T-cell (primary cell): ENCODE measurements at regions of chr14 and their contacts with region 1.

Region 1: DNA sequence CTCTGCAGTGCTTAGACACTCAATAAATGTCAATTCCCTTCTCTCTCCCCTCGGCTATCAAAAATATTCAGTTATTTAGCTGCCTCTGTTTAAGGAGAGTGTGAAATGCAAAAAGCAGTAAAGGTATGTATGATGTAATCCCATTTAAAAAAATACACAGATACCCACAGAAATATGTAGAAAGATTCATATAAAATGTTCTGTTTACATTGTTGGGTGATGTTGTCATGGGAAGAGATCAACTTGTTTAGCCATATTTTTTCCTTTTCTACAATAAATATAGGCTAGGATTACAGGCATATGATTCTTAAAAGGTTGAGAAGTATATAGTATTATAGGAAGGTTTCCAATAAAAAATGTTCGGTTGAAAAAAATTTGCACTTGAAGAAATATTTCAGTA is 7.8 kb downstream of the PPP2R3C start:
- DNase-seq: no peak
- ATAC-seq: no peak
- H3K4me3 ChIP-seq: no peak overlapping the region
- H3K4me3 Mint-ChIP-seq: no peak overlapping the region
- H3K27ac ChIP-seq: no peak overlapping the region
- H3K27ac Mint-ChIP-seq: no peak overlapping the region
- H3K4me1 ChIP-seq: peaks cover 0 to 7% of the 10 kb centered on the region in 2 experiments
- H3K4me1 Mint-ChIP-seq: peaks cover 37 to 46% (median 43%) of the 10 kb centered on the region in 3 donors
- H3K27me3 ChIP-seq: no peaks in the 10 kb centered on the region
- H3K27me3 Mint-ChIP-seq: no peaks in the 10 kb centered on the region

Region 2: DNA sequence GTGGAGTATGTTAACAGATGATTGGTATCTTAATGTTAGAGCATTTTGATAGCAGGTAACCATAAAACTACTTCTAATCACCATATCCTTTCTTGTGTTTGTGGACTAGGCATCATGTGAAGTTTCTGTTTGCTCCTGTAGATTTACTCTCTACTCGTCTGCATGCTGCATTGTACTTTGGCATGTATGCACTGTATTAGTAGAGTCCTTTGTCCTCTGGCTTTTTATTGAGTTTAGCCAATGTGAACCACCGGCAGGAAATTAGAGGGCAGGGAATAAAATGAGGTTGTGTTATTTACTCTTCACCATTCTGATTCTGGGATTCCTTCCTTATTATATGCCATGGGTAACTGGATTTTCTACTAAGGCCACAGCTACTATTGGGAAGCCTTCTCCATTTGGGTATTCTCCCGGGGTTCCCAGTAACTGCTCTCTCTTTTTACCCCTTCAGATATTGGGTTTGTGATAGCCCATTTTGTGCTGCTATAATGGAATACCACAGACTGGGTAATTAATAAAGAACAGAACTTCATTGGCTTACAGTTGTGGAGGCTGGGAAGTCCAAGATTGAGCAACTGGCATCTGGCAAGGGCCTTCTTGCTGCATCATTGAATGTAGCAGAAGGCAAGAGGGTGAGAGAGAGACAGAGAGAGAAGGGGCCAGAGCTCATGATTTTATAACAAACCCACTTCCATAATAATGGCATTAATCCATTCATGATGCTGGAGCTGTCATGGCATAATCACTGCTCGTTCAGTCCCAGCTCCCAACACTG is 45.6 kb before region 1 on chr14:
- CTCF ChIA-PET with region 1: no interaction called
- POLR2A ChIA-PET with region 1: interaction called in 1 of 2 experiments, 10 read pairs
- DNase-seq: no peak
- ATAC-seq: no peak
- H3K4me3 ChIP-seq: no peak overlapping the region
- H3K4me3 Mint-ChIP-seq: no peak overlapping the region
- H3K27ac ChIP-seq: no peak overlapping the region
- H3K27ac Mint-ChIP-seq: no peak overlapping the region
- H3K4me1 ChIP-seq: no peaks in the 10 kb centered on the region
- H3K4me1 Mint-ChIP-seq: peaks cover 0 to 2% (median 0%) of the 10 kb centered on the region in 3 donors
- H3K27me3 ChIP-seq: no peaks in the 10 kb centered on the region
- H3K27me3 Mint-ChIP-seq: no peaks in the 10 kb centered on the region

Region 3: GRCh38 chr14:35374273-35374681 is 260.2 kb after region 1 on chr14:
- CTCF ChIA-PET with region 1: no interaction called
- POLR2A ChIA-PET with region 1: interaction called in 1 of 2 experiments, 18 read pairs
- DNase-seq: no peak
- ATAC-seq: no peak
- H3K4me3 ChIP-seq: no peak overlapping the region
- H3K4me3 Mint-ChIP-seq: no peak overlapping the region
- H3K27ac ChIP-seq: no peak overlapping the region
- H3K27ac Mint-ChIP-seq: no peak overlapping the region
- H3K4me1 ChIP-seq: peaks cover 0 to 4% of the 10 kb centered on the region in 2 experiments
- H3K4me1 Mint-ChIP-seq: peaks cover 0 to 5% (median 0%) of the 10 kb centered on the region in 3 donors
- H3K27me3 ChIP-seq: peaks cover 0 to 3% of the 10 kb centered on the region in 2 experiments
- H3K27me3 Mint-ChIP-seq: no peaks in the 10 kb centered on the region

Region 4: GRCh38 chr14:35861204-35861868 is 747.3 kb after region 1 on chr14:
- CTCF ChIA-PET with region 1: no interaction called
- POLR2A ChIA-PET with region 1: interaction called in 1 of 2 experiments, 14 read pairs
- DNase-seq: no peak
- ATAC-seq: no peak
- H3K4me3 ChIP-seq: no peak overlapping the region
- H3K4me3 Mint-ChIP-seq: no peak overlapping the region
- H3K27ac ChIP-seq: no peak overlapping the region
- H3K27ac Mint-ChIP-seq: no peak overlapping the region
- H3K4me1 ChIP-seq: no peaks in the 10 kb centered on the region
- H3K4me1 Mint-ChIP-seq: no peaks in the 10 kb centered on the region
- H3K27me3 ChIP-seq: no peaks in the 10 kb centered on the region
- H3K27me3 Mint-ChIP-seq: no peaks in the 10 kb centered on the region